ENCODE measurements at regions of chr19 and their contacts with region 1.

Region 1: DNA sequence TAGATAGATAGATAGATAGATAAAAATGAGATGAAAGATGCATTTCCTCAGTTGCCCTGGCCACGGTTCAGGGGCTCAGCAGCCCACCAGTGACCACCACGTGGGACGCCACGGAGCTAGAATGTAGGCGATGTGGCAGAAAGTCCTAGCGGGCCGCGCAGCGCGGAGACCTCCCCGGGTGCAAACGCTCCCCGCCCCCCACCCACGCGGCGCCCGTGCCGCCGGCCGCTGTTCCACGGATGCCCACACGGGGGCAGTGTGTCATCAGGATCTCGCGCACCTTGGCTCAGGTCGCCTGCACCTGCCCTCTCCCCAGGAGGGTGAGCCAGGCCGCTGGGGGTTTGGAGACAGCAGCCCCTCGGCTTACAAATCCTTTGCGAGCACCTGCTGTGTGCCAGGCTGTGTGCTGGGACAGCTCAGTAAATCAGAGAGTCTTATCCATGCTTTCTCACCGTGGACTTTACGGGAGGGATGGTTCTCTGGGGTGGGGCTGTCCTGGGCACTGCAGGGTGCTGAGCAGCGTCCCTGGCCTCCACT is 13.7 kb upstream of the TLE5 start:
- DNase-seq: peak; percentile 78
- H3K4me3 ChIP-seq: no peak overlapping the region
- H3K27ac ChIP-seq: no peak overlapping the region
- H3K4me1 ChIP-seq: no peaks in the 10 kb centered on the region
- H3K27me3 ChIP-seq: no peaks in the 10 kb centered on the region
- CTCF ChIP-seq: peak; percentile 96

Region 2: DNA sequence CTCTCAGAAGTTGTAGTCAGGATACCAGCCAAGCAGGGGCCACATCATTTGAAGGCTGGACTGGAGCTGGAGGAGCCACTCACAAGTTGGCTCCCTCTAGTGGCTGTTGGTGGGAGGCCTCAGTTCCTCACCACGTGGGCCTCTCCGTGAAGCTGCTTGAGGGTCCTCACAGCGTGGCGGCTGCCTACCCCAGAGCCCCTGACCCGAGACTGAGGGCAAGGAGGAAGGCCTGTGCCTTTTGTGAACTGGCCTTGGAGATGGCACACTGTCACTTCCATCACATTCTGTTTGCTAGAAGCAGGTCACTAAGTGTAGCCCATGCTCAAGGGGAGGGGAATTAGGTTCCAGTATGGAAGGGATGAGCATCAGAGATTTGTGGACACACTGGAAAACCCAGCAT is 32.8 kb after region 1 on chr19:
- intact Hi-C with region 1: loop called (anchors 2 kb)
- DNase-seq: peak; percentile 74
- H3K4me3 ChIP-seq: no peak overlapping the region
- H3K27ac ChIP-seq: no peak overlapping the region
- H3K4me1 ChIP-seq: peaks cover 10% of the 10 kb centered on the region
- H3K27me3 ChIP-seq: no peaks in the 10 kb centered on the region
- CTCF ChIP-seq: peak; percentile 83

Region 3: GRCh38 chr19:3163230-3163886 is 87.4 kb after region 1 on chr19:
- intact Hi-C with region 1: loop called (anchors 5 kb)
- DNase-seq: peak; percentile 68
- H3K4me3 ChIP-seq: no peak overlapping the region
- H3K27ac ChIP-seq: no peak overlapping the region
- H3K4me1 ChIP-seq: no peaks in the 10 kb centered on the region
- H3K27me3 ChIP-seq: no peaks in the 10 kb centered on the region
- CTCF ChIP-seq: peak; percentile 91